PC-3 (cell line): ENCODE measurements at regions of chr12 and their contacts with region 1.

Region 1: DNA sequence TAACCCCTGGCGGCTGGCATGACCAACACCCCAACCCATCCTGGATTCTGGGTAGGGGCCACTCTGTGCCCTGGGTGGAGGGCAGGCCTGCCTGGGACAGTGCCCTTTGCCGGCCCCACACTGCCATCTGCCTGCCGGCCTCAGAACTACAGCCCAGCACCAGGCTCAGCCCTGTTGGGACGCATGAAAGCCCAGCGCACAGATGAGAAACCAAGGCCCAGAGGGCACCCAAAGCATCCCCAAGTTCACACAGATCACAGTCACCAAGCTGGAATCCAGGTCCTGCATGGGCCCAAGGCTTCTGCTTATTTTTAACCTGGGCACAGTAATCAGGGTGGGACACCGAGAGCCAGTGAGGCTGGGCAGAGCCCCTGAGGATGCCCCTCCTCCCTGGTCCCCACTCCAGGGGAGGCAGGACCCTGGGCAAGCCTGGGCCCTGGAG is 26.2 kb downstream of the RFLNA start:
- DNase-seq: peak; percentile 81
- ATAC-seq: peak; percentile 76
- H3K4me3 ChIP-seq: no peak overlapping the region
- H3K27ac ChIP-seq: no peak overlapping the region
- H3K4me1 ChIP-seq: no peaks in the 10 kb centered on the region
- H3K27me3 ChIP-seq: no peaks in the 10 kb centered on the region
- CTCF ChIP-seq: peak; percentile 96

Region 2: GRCh38 chr12:124053851-124054250 is 267.2 kb before region 1 on chr12:
- CTCF ChIA-PET with region 1: no interaction called
- POLR2A ChIA-PET with region 1: no interaction called
- intact Hi-C with region 1: loop called (anchors 5 kb)
- DNase-seq: peak; percentile 32
- ATAC-seq: peak; percentile 46; the same call in 1 of the 2 replicates
- H3K4me3 ChIP-seq: no peak overlapping the region
- H3K27ac ChIP-seq: no peak overlapping the region
- H3K4me1 ChIP-seq: no peaks in the 10 kb centered on the region
- H3K27me3 ChIP-seq: peaks cover 28% of the 10 kb centered on the region
- CTCF ChIP-seq: peak; percentile 56

Region 3: DNA sequence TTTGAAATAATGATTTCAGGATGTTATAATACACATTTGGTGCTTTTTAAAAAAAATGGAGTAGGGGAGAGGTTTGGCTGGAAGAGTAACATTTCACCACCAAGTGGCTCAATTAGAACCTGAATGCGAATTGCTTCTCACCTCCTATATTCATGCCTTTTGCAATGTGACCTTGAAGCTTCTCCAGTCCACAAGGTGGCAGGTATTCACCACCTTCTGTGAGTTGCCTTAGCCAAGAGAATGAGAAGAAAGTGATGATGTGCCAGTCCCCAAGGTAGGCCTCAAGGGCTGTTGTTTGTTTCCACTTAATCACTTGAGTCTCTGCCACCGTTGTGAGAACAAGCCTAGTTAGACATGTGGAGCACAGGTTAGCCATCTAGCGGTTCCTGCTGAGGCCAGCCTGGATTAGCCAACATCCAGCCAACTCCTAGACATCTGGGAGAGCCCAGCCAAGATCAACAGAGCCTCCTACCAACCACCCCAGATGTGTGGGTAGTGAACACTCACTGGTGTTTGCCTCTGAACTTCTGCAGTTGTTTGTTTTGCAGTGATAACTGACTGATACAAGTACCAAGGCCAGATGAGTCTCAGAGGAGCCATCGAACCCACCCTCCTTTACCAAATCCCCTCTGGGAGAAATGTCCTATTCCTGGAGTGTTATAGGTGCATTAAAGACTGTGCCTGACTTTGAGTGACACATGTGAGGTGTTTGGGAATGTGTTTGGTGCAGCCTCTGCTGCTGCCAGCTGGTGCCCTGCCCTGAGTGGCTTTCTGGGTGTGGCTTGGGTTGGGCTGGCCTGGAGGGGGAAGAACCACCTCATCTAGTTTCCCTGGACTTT is 158.7 kb before region 1 on chr12:
- CTCF ChIA-PET with region 1: no interaction called
- POLR2A ChIA-PET with region 1: no interaction called
- intact Hi-C with region 1: loop called (anchors 2 kb)
- DNase-seq: peak; percentile 43
- ATAC-seq: peak; percentile 27; the same call in 1 of the 2 replicates
- H3K4me3 ChIP-seq: no peak overlapping the region
- H3K27ac ChIP-seq: no peak overlapping the region
- H3K4me1 ChIP-seq: no peaks in the 10 kb centered on the region
- H3K27me3 ChIP-seq: peaks cover 49% of the 10 kb centered on the region
- CTCF ChIP-seq: peak; percentile 46